A549 (cell line): ENCODE measurements at regions of chr12 and their contacts with region 1.

Region 1: DNA sequence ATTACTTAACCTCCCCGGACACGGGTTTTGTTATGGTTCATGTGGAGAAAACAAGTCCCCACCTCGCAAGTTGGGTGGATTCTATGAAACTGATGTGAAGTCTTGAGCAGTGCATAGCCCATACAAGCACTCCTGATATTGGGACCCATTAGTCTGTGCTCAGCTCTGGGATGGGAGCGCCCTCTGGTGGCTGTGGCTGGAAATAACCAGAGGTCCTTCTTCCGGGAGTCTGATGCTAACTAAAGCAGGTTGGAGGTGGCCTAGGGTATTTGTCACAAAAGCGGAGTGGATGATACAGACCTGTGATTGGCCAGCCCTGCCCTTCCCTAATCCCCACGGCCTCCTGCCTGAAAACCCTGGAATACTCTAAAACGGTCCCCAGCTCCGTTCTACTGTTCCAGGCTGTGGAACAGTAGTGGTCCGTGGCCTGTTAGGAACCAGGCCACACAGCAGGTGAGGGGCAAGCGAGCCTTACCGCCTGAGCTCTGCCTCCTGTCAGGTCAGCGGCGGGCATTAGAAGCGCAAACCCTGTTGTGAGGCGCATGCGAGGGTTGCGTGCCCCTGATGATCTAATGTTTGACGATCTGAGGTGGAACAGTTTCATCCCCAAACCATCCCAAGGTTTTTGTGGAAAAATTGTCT is 6.4 kb downstream of the SLC48A1 start:
- DNase-seq: peak; percentile 86 to 90
- ATAC-seq: peak; percentile 67 to 84
- H3K4me3 ChIP-seq: no peak overlapping the region
- H3K27ac ChIP-seq: peak overlapping the region in 1 of 2 experiments; percentile 7; a peak in 1 of 6 replicates
- H3K4me1 ChIP-seq: peaks cover 47% of the 10 kb centered on the region
- CTCF ChIP-seq: peak; percentile 93
- EP300 ChIP-seq: no peak
- POLR2A ChIP-seq: no peak
- RAD21 ChIP-seq: peak; percentile 83 to 93

Region 2: DNA sequence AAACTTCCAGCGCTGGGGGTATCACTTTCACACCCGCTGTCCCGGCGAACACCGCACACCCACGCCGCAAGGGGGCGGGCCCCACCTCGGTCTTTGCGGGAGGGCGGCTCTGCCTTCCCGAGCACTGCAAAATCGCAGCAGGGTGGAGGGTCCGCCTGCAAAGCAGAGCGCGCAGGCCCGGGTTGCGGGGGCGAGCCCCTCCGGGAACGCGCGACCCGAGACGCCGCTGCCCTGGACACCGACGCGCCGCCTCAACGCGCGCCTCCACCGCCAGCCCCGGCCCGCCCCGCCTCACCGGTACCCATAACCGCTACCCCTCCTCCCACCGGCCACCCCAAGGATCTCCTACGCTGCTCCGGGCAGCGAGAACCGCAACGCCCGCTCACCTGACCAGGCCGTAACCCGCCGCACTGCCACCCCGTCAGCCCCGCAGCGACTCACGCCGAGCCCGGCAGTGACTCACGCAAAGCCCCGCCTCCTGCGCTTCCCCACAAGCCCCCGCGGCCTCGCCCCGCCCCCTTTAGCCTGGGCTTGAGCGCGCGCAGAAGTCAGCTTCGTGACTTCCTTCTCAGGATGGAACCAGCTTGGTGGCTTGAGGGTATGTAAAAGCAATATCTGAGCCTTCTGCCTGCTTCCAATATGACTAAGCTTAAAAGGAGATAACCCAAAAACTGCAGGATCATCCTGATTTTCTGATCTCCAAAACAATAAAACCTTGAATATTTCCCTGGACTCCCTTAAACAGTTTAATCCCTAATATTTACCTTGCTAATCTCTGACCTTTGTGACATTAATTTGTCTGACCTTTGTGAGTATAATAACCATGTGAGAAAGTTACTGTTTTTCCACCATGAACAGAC is 73.6 kb before region 1 on chr12 and contains the start of gene RPAP3:
- CTCF ChIA-PET with region 1: interaction called, 343 read pairs
- POLR2A ChIA-PET with region 1: interaction called, 4 read pairs
- DNase-seq: peak; percentile 81 to 94
- ATAC-seq: peak; percentile 95 to 98
- H3K4me3 ChIP-seq: peak within 1 kb of the TSS; percentile 81
- H3K27ac ChIP-seq: peak within 1 kb of the TSS; percentile 90 to 96
- H3K4me1 ChIP-seq: peaks cover 21% of the 10 kb centered on the region; the same call in 2 of the 3 replicates
- CTCF ChIP-seq: peak; percentile 60
- EP300 ChIP-seq: no peak
- POLR2A ChIP-seq: peak; percentile 96
- RAD21 ChIP-seq: peak in 1 of 2 experiments; percentile 31; a peak in 1 of 5 replicates
- polyA plus RNA-seq, gene RPAP3: 51.9 and 74.6 TPM in 2 replicates

Region 3: GRCh38 chr12:47758834-47759690 is 20.4 kb before region 1 on chr12 and contains the start of gene RAPGEF3:
- CTCF ChIA-PET with region 1: interaction called, 1,399 read pairs
- POLR2A ChIA-PET with region 1: no interaction called
- DNase-seq: peak; percentile 82 to 92
- ATAC-seq: peak; percentile 87 to 94
- H3K4me3 ChIP-seq: peak within 1 kb of the TSS; percentile 58
- H3K27ac ChIP-seq: peak within 1 kb of the TSS; percentile 80 to 94
- H3K4me1 ChIP-seq: peaks cover 10% of the 10 kb centered on the region
- CTCF ChIP-seq: peak; percentile 62
- EP300 ChIP-seq: no peak
- POLR2A ChIP-seq: peak; percentile 9; the same call in 1 of the 2 replicates
- RAD21 ChIP-seq: 0 out of 5 replicates have a peak, but pooled peaks of 1 of the 2 experiments have one; percentile 15
- polyA plus RNA-seq, gene RAPGEF3: 0.70 and 0.75 TPM in 2 replicates

Region 4: GRCh38 chr12:47805417-47805816 is 26.0 kb after region 1 on chr12:
- CTCF ChIA-PET with region 1: interaction called, 13 read pairs
- POLR2A ChIA-PET with region 1: no interaction called
- DNase-seq: no peak
- ATAC-seq: no peak
- H3K4me3 ChIP-seq: no peak overlapping the region
- H3K27ac ChIP-seq: no peak overlapping the region
- H3K4me1 ChIP-seq: peaks cover 38% of the 10 kb centered on the region
- CTCF ChIP-seq: no peak
- EP300 ChIP-seq: no peak
- POLR2A ChIP-seq: no peak
- RAD21 ChIP-seq: no peak

Region 5: GRCh38 chr12:47819896-47820630 is 40.6 kb after region 1 on chr12 and contains the start of gene HDAC7:
- CTCF ChIA-PET with region 1: interaction called, 1,532 read pairs
- POLR2A ChIA-PET with region 1: no interaction called
- DNase-seq: peak; percentile 86 to 90
- ATAC-seq: peak; percentile 52 to 74
- H3K4me3 ChIP-seq: peak within 1 kb of the TSS; percentile 89
- H3K27ac ChIP-seq: peak within 1 kb of the TSS; percentile 96 to 100
- H3K4me1 ChIP-seq: peaks cover 68% of the 10 kb centered on the region
- CTCF ChIP-seq: no peak
- EP300 ChIP-seq: 0 out of 5 replicates have a peak, but pooled peaks have one; percentile 23 to 29
- POLR2A ChIP-seq: peak; percentile 82
- RAD21 ChIP-seq: no peak
- polyA plus RNA-seq, gene HDAC7: 17.2 and 20.8 TPM in 2 replicates

Region 6: DNA sequence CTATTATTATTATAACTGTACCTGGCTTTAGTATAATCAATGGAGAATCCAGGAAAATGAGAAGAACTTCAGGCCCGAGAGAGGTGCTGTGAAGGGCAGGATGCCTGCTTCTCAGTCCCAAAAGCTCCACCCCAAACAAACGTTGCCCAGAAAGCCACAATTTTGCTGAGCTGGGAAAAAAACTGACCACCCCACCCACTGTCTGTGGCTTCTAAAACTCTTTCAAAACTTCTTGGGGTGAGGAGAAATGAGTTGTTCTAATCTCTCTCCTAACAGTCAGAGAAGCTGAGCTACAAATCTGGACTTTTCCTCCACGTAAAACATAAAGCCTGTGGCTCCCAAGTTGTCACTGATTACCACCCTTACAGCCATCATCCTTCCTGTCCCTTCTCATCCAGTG is 111.9 kb after region 1 on chr12:
- CTCF ChIA-PET with region 1: no interaction called
- POLR2A ChIA-PET with region 1: no interaction called
- DNase-seq: no peak
- ATAC-seq: no peak
- H3K4me3 ChIP-seq: no peak overlapping the region
- H3K27ac ChIP-seq: no peak overlapping the region
- H3K4me1 ChIP-seq: peaks cover 2% of the 10 kb centered on the region; the same call in 1 of the 3 replicates
- CTCF ChIP-seq: no peak
- EP300 ChIP-seq: no peak
- POLR2A ChIP-seq: no peak
- RAD21 ChIP-seq: no peak